Mammary epithelial cell (primary cell): ENCODE measurements at regions of chr20 and their contacts with region 1.

Region 1: DNA sequence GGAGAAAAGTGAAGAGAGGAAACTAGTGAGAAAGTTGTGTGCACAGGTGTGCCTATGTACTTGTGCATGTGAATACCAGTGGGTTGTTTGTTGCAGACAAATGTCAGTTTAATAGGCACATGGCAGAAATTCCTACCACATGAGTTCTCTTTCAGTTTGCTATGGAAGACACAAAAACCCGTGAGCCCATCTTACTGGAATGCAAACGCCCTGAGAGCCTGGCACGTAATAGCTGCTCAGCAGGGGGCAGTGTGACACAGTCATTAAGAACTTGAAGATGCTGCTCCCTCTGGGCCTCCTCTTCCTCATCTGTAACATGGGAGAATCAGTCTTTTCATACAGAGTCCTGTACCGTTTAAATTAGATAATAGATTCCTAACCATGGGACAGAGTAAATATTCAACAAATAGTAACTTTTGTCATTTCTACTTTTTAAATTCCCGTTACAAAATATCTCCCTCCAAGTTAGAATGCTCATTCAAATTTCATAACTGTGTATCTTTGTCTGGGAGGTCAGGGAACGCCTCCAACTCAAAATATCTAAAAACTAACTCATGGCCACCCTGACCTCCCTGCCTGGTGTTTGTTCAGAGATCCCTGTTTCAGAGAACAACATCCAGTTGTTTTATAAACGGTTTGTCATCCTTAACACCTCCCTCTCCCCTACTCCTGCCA is 802.9 kb downstream of the MAFB start:
- DNase-seq: peak; percentile 61
- H3K4me3 ChIP-seq: no peak overlapping the region
- H3K27ac ChIP-seq: no peak overlapping the region
- H3K4me1 ChIP-seq: no peaks in the 10 kb centered on the region
- H3K27me3 ChIP-seq: no peaks in the 10 kb centered on the region
- CTCF ChIP-seq: peak; percentile 58 to 59

Region 2: GRCh38 chr20:39112178-39112743 is 773.9 kb before region 1 on chr20:
- CTCF ChIA-PET with region 1: no interaction called
- dilution Hi-C with region 1: no loop called
- in situ Hi-C with region 1: no loop called
- intact Hi-C with region 1: loop called (anchors 2 kb)
- DNase-seq: peak; percentile 4
- H3K4me3 ChIP-seq: no peak overlapping the region
- H3K27ac ChIP-seq: no peak overlapping the region
- H3K4me1 ChIP-seq: no peaks in the 10 kb centered on the region
- H3K27me3 ChIP-seq: no peaks in the 10 kb centered on the region
- CTCF ChIP-seq: peak; percentile 52 to 70

Region 3: DNA sequence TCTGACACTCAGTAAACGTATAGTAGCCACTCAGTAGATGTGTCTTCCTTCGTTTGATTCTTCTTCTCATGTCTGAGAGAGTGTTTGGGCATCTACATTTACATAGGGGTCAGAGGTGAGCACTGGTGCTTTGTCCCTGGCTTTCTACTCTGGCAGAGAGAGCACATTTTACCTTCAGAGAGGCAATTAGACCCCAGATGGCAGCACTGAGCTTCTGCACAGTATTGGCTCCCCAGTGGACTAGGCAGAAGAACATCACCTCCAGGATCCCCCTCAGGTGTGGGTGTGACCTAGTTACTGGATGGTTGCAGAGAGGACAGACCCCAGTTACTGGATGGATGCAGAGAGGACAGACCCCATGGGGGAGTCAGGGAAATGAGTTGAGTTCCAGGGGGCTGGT is 596.8 kb before region 1 on chr20:
- CTCF ChIA-PET with region 1: no interaction called
- dilution Hi-C with region 1: no loop called
- in situ Hi-C with region 1: loop called in 1 of 2 experiments (anchors 25 kb)
- intact Hi-C with region 1: no loop called
- DNase-seq: no peak
- H3K4me3 ChIP-seq: no peak overlapping the region
- H3K27ac ChIP-seq: no peak overlapping the region
- H3K4me1 ChIP-seq: no peaks in the 10 kb centered on the region
- H3K27me3 ChIP-seq: no peaks in the 10 kb centered on the region
- CTCF ChIP-seq: peak; percentile 15 to 33

Region 4: GRCh38 chr20:39676857-39677391 is 209.2 kb before region 1 on chr20:
- CTCF ChIA-PET with region 1: no interaction called
- dilution Hi-C with region 1: no loop called
- in situ Hi-C with region 1: no loop called
- intact Hi-C with region 1: no loop called
- DNase-seq: peak; percentile 12
- H3K4me3 ChIP-seq: no peak overlapping the region
- H3K27ac ChIP-seq: no peak overlapping the region
- H3K4me1 ChIP-seq: no peaks in the 10 kb centered on the region
- H3K27me3 ChIP-seq: no peaks in the 10 kb centered on the region
- CTCF ChIP-seq: peak; percentile 17 to 40

Region 5: GRCh38 chr20:39839399-39840119 is 46.6 kb before region 1 on chr20:
- CTCF ChIA-PET with region 1: no interaction called
- dilution Hi-C with region 1: no loop called
- in situ Hi-C with region 1: no loop called
- intact Hi-C with region 1: no loop called
- DNase-seq: no peak
- H3K4me3 ChIP-seq: no peak overlapping the region
- H3K27ac ChIP-seq: no peak overlapping the region
- H3K4me1 ChIP-seq: no peaks in the 10 kb centered on the region
- H3K27me3 ChIP-seq: peaks cover 2% of the 10 kb centered on the region
- CTCF ChIP-seq: no peak

Region 6: DNA sequence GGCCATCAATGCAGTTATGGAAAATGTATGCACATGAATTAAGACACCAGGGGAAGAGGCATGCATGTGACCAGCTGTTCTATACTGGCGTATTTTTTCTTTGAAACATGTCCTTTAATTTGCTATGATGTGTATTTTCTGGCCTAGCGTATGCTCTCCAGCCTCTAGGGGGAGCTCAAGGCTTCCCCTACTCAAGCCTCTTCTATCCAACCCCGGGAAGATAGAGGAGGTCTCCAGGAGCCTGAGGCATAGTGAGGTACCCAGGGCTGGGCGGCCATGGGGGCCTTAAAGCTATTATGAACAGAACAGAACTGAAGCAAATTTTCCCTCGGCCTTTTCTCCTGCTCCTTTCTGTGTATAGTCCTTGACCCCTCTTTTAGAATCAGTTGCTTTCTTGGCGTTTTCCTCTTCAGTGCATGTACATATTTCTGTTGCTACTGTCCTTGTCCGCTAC is 274.0 kb after region 1 on chr20:
- CTCF ChIA-PET with region 1: no interaction called
- dilution Hi-C with region 1: no loop called
- in situ Hi-C with region 1: no loop called
- intact Hi-C with region 1: loop called (anchors 1 kb)
- DNase-seq: peak; percentile 41
- H3K4me3 ChIP-seq: no peak overlapping the region
- H3K27ac ChIP-seq: no peak overlapping the region
- H3K4me1 ChIP-seq: no peaks in the 10 kb centered on the region
- H3K27me3 ChIP-seq: no peaks in the 10 kb centered on the region
- CTCF ChIP-seq: peak; percentile 90 to 93

Region 7: DNA sequence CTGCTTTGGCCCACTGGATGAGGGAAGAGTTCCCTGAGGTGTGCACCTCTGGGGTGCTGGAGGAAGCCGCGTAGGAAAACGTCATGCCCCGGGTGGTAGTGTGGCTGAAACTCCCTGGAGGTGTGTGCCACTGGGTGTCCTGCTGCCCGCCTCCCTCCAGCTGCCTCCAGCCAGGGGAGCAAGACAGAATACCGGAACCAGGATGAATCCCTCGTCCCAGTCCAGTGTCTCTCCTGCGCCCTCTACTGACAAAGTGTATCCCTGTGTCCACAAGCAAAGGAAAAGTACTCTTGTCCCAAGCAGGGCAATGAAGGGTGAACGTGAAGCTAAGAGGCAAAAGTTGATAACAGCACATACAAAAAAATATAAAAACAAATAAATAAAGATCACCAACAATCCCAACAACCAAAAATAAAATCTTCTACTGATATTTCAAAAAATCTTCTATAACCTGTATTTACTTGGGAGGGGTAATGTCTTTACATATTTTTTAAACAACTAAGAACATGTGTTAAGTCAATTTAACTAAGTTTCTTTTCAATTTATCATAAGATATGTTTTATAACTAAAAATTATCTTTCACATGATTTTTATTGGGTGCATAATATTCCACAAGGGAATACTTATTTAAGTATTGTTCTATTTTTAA is 365.3 kb after region 1 on chr20:
- CTCF ChIA-PET with region 1: no interaction called
- dilution Hi-C with region 1: no loop called
- in situ Hi-C with region 1: no loop called
- intact Hi-C with region 1: loop called (anchors 1 kb)
- DNase-seq: peak; percentile 48
- H3K4me3 ChIP-seq: no peak overlapping the region
- H3K27ac ChIP-seq: no peak overlapping the region
- H3K4me1 ChIP-seq: no peaks in the 10 kb centered on the region
- H3K27me3 ChIP-seq: no peaks in the 10 kb centered on the region
- CTCF ChIP-seq: peak; percentile 70 to 90

Region 8: DNA sequence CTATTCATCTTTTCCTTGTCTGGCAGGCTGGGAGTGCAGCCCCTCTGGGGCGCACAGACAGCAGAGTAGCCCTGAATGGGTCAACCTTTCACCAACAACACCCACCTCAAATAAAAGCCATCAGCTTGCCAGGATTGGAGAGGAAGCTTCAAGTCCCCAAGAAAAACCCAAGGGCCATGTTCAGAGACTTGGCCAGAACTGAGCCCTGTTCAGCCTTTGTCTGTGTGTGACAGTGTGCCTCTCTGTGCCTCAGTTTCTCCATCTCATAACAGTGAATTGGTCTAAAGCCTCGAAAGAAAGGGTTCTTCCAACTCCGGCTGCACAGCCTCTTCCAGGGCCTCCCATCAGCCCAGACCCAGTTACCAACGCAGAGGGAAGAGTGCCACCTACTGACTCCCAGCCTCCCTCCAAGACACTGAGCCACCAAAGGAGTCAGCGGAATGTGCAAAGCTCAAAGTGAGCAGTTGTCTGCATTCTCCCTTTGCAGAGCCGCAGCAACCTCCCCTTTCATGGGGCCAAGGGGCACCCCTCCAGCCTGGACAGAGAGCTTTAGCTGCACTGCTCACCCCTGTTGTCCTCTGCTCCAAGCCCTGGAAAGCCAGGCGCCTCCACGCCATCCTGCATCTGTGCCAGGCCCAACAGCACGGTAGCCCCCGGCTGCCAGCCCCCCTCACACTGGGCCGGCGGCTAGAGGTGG is 1059.8 kb after region 1 on chr20:
- CTCF ChIA-PET with region 1: no interaction called
- dilution Hi-C with region 1: no loop called
- in situ Hi-C with region 1: loop called in 1 of 2 experiments (anchors 25 kb)
- intact Hi-C with region 1: no loop called
- DNase-seq: no peak
- H3K4me3 ChIP-seq: no peak overlapping the region
- H3K27ac ChIP-seq: no peak overlapping the region
- H3K4me1 ChIP-seq: no peaks in the 10 kb centered on the region
- H3K27me3 ChIP-seq: peaks cover 2% of the 10 kb centered on the region
- CTCF ChIP-seq: peak; percentile 71 to 76